ENCODE measurements at regions of chr6 and their contacts with region 1.

Region 1: GRCh38 chr6:22980446-22980845 is 411.1 kb downstream of the HDGFL1 start:
- DNase-seq: no peak
- H3K4me3 ChIP-seq: no peak overlapping the region
- H3K27ac ChIP-seq: no peak overlapping the region
- H3K4me1 ChIP-seq: no peaks in the 10 kb centered on the region
- H3K27me3 ChIP-seq: no peaks in the 10 kb centered on the region
- CTCF ChIP-seq: no peak

Region 2: GRCh38 chr6:21533678-21534077 is 1446.8 kb before region 1 on chr6:
- intact Hi-C with region 1: loop called (anchors 5 kb)
- DNase-seq: no peak
- H3K4me3 ChIP-seq: no peak overlapping the region
- H3K27ac ChIP-seq: no peak overlapping the region
- H3K4me1 ChIP-seq: no peaks in the 10 kb centered on the region
- H3K27me3 ChIP-seq: no peaks in the 10 kb centered on the region
- CTCF ChIP-seq: no peak

Measured in tibial artery (tissue), 4 donors.